Colonic mucosa (tissue), 4 donors: ENCODE measurements at regions of chr16 and their contacts with region 1.

Region 1: GRCh38 chr16:8880839-8881510 is 1.2 kb upstream of the LITAFD start:
- DNase-seq: no peak
- H3K4me3 ChIP-seq: no peak overlapping the region
- H3K27ac ChIP-seq: no peak overlapping the region
- H3K4me1 ChIP-seq: peaks cover 13% of the 10 kb centered on the region
- H3K27me3 ChIP-seq: no peaks in the 10 kb centered on the region
- CTCF ChIP-seq: no peak

Region 2: GRCh38 chr16:8567750-8568617 is 313.0 kb before region 1 on chr16:
- intact Hi-C with region 1: loop called (anchors 5 kb)
- DNase-seq: peak; percentile 82
- H3K4me3 ChIP-seq: no peak overlapping the region
- H3K27ac ChIP-seq: no peak overlapping the region
- H3K4me1 ChIP-seq: no peaks in the 10 kb centered on the region
- H3K27me3 ChIP-seq: no peaks in the 10 kb centered on the region
- CTCF ChIP-seq: peak; percentile 99

Region 3: DNA sequence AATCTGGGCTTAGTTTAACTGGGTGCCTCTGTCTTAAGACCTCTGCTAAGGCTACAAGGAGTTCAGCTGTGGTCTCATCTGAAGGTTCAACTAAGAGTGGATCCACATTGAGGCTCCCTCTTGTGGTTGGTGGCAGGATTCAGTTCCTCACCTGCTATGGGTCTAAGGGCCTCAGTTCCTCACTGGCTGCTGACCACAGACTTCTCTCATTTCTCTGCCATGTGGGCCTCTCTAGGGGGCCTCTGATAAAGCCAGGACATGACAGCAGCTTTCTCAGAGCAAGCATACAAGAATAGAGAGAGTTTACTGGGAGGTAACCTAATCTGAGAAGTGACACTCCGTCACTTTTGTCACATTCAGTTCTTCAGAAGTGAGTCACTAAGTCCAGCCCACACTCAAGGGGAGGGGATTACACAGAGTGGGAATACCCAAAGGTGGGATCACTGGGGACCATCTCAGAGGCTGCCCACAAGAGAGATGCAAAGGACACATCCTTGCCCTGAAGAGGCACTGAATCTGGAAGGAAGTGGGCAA is 225.7 kb before region 1 on chr16:
- intact Hi-C with region 1: loop called (anchors 5 kb)
- DNase-seq: peak; percentile 57
- H3K4me3 ChIP-seq: no peak overlapping the region
- H3K27ac ChIP-seq: no peak overlapping the region
- H3K4me1 ChIP-seq: no peaks in the 10 kb centered on the region
- H3K27me3 ChIP-seq: no peaks in the 10 kb centered on the region
- CTCF ChIP-seq: no peak

Region 4: GRCh38 chr16:8797364-8798173 is 83.4 kb before region 1 on chr16 and contains the starts of genes PMM2 and TMEM186:
- intact Hi-C with region 1: loop called (anchors 5 kb)
- DNase-seq: peak; percentile 99
- H3K4me3 ChIP-seq: peak within 1 kb of the TSS; percentile 90
- H3K27ac ChIP-seq: peak within 1 kb of the TSS; percentile 77
- H3K4me1 ChIP-seq: peaks cover 14% of the 10 kb centered on the region
- H3K27me3 ChIP-seq: no peaks in the 10 kb centered on the region
- CTCF ChIP-seq: no peak
- total RNA-seq, gene PMM2: 60.7 to 88.1 TPM
- total RNA-seq, gene TMEM186: 11.9 to 20.3 TPM